HEK293 (cell line): ENCODE measurements at regions of chr7 and their contacts with region 1.

Region 1: GRCh38 chr7:123871998-123872867 is 27.3 kb downstream of the HYAL4 start:
- H3K4me3 ChIP-seq: no peak overlapping the region
- H3K27ac ChIP-seq: no peak overlapping the region
- H3K4me1 ChIP-seq: no peaks in the 10 kb centered on the region
- CTCF ChIP-seq: peak; percentile 63

Region 2: GRCh38 chr7:123580406-123581161 is 291.6 kb before region 1 on chr7:
- CTCF ChIA-PET with region 1: interaction called, 18 read pairs
- POLR2A ChIA-PET with region 1: no interaction called
- H3K4me3 ChIP-seq: no peak overlapping the region
- H3K27ac ChIP-seq: no peak overlapping the region
- H3K4me1 ChIP-seq: no peaks in the 10 kb centered on the region
- CTCF ChIP-seq: peak; percentile 77

Region 3: GRCh38 chr7:123601530-123601929 is 270.7 kb before region 1 on chr7 and contains the start of gene ASB15:
- CTCF ChIA-PET with region 1: no interaction called
- POLR2A ChIA-PET with region 1: no interaction called
- H3K4me3 ChIP-seq: no peak within 1 kb of the TSS
- H3K27ac ChIP-seq: no peak within 1 kb of the TSS
- H3K4me1 ChIP-seq: no peaks in the 10 kb centered on the region
- CTCF ChIP-seq: no peak

Region 4: GRCh38 chr7:123635551-123636359 is 236.5 kb before region 1 on chr7:
- CTCF ChIA-PET with region 1: interaction called, 29 read pairs
- POLR2A ChIA-PET with region 1: no interaction called
- H3K4me3 ChIP-seq: no peak overlapping the region
- H3K27ac ChIP-seq: no peak overlapping the region
- H3K4me1 ChIP-seq: no peaks in the 10 kb centered on the region
- CTCF ChIP-seq: peak; percentile 13; the same call in 1 of the 2 replicates

Region 5: DNA sequence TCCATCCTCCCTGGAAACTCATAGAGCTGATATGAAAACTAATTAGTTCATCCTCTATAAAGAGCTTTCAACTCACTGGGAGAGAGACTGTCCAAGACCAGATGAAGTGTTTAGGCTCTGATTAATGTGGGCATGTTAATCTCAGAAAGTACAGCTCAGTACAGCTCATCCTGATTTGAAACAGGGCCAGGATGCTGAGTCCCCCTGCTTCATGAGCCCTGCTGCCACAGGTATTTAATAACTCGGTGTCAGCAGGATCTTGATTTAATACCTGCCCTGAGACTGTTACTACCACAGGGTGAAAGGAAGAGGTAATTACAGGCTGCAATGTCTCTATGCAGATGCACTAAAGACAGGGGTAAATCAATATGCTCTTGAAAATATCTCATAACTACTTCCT is 205.7 kb before region 1 on chr7:
- CTCF ChIA-PET with region 1: no interaction called
- POLR2A ChIA-PET with region 1: no interaction called
- H3K4me3 ChIP-seq: no peak overlapping the region
- H3K27ac ChIP-seq: no peak overlapping the region
- H3K4me1 ChIP-seq: no peaks in the 10 kb centered on the region
- CTCF ChIP-seq: no peak

Region 6: GRCh38 chr7:123682690-123683089 is 189.5 kb before region 1 on chr7:
- CTCF ChIA-PET with region 1: interaction called, 12 read pairs
- POLR2A ChIA-PET with region 1: no interaction called
- H3K4me3 ChIP-seq: no peak overlapping the region
- H3K27ac ChIP-seq: no peak overlapping the region
- H3K4me1 ChIP-seq: no peaks in the 10 kb centered on the region
- CTCF ChIP-seq: no peak

Region 7: DNA sequence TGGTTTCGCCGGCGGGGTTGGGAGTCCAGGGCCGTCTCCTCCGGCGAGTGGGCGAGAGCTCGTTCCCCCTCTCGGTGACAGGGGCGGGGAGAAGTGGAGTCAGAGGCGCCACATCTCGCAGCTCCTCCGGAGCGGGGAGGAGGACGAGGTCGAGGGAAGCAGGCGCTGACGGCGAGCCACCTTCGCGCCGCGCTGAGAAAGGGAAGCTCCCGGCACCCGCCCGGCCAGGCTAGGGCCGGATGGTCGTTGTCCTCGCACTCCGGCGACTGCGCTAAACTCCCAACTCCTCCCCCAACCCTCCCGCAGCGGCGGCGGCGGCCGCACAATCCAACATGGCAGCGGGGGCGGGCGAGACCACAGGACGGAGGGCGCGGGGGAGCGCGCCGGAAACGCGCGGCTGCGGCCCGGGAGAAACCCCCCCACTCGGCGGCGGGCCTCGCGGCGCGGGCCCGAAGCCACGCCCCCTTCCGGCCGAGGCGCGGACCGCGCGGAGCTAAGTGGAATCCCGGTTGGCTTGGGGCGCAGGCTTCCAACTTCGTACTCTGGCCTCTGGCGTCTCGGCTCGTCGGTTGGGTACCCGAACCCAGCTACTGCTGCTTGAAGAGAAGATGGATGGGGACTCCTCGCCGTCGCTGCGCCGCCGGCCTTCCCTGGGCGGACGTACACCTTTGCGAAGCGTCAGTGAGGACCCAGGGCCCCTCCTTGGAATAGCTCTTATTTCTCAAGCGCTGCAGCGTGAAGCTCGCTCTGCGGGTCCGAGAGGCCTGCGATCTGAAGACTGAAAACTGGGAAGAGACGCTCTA is 123.3 kb before region 1 on chr7 and contains the start of gene WASL:
- CTCF ChIA-PET with region 1: interaction called, 13 read pairs
- POLR2A ChIA-PET with region 1: no interaction called
- H3K4me3 ChIP-seq: peak within 1 kb of the TSS; percentile 92
- H3K27ac ChIP-seq: peak within 1 kb of the TSS; percentile 97
- H3K4me1 ChIP-seq: peaks cover 18% of the 10 kb centered on the region
- CTCF ChIP-seq: no peak

Region 8: DNA sequence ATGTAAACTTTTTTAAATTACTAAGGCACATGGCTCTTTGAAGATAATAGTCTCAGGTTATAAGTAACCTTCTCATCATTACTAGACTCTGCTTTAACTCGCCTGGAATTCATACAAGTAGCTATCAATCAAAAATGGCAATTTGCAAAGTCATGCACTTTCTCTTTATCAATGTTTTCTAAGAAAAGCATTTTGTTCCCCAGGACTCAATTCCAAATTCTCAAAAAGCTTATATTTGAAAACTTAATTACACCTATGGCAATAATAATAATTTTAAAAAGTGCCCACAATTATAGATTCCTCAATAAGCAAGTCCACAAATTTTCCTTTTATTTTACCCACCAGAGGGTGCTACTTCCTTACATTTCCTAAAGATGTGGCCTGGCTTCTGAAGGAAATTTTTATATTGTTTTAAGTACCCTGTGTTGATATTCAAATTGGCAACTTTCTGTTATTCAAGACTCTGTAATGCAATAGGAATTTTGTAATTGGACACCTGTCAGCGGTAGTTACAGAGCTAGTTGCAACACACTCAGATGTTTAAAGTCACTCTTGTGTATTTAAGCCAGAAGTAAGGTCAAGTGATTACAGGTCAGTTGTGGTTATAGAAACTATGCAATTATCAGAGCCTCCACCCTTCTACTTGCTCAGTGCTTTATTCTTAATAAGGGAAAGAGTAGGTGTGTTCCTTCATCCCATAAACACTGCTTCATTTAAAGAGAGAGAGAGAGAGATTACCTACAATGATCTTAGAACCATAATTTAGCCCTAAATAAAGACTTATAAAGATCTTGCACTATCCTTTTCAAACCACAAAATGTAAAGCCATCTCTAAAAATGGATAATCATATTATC is 74.3 kb before region 1 on chr7:
- CTCF ChIA-PET with region 1: interaction called, 74 read pairs
- POLR2A ChIA-PET with region 1: interaction called, 3 read pairs
- H3K4me3 ChIP-seq: no peak overlapping the region
- H3K27ac ChIP-seq: peak overlapping the region; percentile 19; the same call in 1 of the 2 replicates
- H3K4me1 ChIP-seq: peaks cover 13% of the 10 kb centered on the region; the same call in 1 of the 2 replicates
- CTCF ChIP-seq: no peak

Region 9: GRCh38 chr7:123846216-123846891 is 25.9 kb before region 1 on chr7:
- CTCF ChIA-PET with region 1: no interaction called
- POLR2A ChIA-PET with region 1: no interaction called
- H3K4me3 ChIP-seq: no peak overlapping the region
- H3K27ac ChIP-seq: no peak overlapping the region
- H3K4me1 ChIP-seq: no peaks in the 10 kb centered on the region
- CTCF ChIP-seq: no peak

Region 10: DNA sequence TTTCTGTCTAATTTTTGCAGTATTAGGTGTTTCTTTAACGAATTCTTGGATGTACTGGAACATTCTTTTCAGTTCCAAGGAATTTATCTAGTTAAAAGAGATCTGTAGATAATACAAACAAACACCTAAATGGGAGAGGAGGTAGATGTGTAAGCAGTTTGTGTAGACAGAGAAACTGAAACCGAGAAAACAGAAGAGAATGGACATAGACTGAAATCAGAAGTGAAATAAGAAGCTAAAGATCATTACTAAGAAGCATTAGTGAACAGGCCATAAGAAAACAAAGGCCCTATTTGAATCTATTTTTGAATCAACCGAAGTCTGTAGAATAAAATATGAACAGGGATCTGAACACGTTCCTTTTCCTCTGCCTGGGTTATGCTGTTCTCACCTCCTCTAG is 187.1 kb after region 1 on chr7:
- CTCF ChIA-PET with region 1: no interaction called
- POLR2A ChIA-PET with region 1: no interaction called
- H3K4me3 ChIP-seq: no peak overlapping the region
- H3K27ac ChIP-seq: no peak overlapping the region
- H3K4me1 ChIP-seq: no peaks in the 10 kb centered on the region
- CTCF ChIP-seq: no peak